HCT116 (cell line): ENCODE measurements at regions of chr19 and their contacts with region 1.

Region 1: DNA sequence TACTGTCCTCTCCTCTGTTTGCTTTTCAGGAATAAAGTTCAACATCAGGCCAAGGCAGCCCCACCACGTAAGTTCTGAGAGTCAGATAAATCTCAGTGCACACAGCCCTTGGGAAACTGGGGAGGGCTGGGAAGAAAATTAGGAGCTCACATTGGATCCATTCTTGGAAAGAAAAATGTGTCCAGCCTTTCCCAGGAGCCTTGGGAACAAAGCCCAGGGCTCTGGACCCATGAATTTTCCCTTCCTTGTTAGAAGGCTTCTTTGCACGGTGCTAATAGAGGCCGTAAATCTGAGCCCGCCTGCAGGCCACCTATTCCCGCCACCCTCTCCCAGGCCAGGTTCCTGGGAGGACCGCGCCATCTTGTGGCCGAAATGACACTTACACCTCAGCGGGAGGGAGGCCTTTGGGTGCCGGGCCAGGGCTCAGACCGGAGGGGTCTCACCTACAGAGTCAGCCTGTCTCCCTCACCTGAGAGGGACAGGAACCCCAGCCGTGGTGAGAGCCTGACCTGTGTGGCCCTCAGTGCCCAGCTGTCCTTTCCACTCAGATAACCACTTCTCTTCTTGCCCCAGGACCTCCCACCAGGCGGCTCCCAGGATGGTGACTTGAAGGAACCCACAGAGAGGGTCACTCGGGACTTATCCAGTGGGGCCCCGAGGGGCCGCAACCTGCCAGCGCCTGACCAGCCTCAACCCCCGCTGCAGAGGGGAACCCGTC is 25.1 kb upstream of the KCTD15 start:
- DNase-seq: no peak
- ATAC-seq: peak; percentile 94
- H3K4me3 ChIP-seq: no peak overlapping the region
- H3K27ac ChIP-seq: no peak overlapping the region
- H3K4me1 ChIP-seq: no peaks in the 10 kb centered on the region
- H3K27me3 ChIP-seq: peaks cover 18% of the 10 kb centered on the region
- CTCF ChIP-seq: peak; percentile 79 to 91 (median 86)
- POLR2A ChIP-seq: no peak
- RAD21 ChIP-seq: peak; percentile 93

Region 2: DNA sequence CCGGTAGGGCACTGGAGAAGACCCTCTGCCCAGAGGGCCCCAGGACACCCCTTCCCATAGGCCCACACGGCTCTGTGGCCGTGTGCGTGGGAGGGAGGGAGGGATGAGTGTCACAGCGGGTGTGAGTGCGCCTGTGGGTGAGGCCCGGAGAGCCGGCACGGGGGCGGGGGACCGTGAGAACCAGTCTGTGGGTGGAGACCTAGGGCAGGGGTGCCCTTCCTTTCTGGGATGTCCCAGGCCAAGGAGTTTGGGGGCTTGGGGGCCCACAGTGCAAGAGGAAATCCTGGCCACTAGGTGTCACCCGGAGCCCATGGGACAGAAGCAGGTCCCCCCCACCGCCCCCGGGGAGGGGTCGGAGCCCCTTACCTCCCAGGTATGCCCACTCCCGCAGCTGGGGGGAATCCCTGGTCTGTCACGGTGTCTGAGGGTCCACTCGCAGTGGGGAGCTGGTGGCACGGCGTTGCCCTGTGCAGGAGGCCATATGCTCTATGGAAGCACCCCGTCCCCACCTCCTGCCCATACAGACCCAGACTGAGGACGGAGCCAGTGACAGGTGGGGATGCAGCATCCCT is 529.9 kb before region 1 on chr19:
- CTCF ChIA-PET with region 1: no interaction called
- POLR2A ChIA-PET with region 1: no interaction called
- RAD21 ChIA-PET with region 1: no interaction called
- intact Hi-C with region 1: loop called (anchors 1 kb)
- DNase-seq: no peak
- ATAC-seq: peak; percentile 77
- H3K4me3 ChIP-seq: no peak overlapping the region
- H3K27ac ChIP-seq: no peak overlapping the region
- H3K4me1 ChIP-seq: peaks cover 0 to 11% of the 10 kb centered on the region in 2 experiments; a peak in 2 of 4 replicates
- H3K27me3 ChIP-seq: no peaks in the 10 kb centered on the region
- CTCF ChIP-seq: peak; percentile 61 to 82 (median 78)
- POLR2A ChIP-seq: no peak
- RAD21 ChIP-seq: peak; percentile 93

Region 3: DNA sequence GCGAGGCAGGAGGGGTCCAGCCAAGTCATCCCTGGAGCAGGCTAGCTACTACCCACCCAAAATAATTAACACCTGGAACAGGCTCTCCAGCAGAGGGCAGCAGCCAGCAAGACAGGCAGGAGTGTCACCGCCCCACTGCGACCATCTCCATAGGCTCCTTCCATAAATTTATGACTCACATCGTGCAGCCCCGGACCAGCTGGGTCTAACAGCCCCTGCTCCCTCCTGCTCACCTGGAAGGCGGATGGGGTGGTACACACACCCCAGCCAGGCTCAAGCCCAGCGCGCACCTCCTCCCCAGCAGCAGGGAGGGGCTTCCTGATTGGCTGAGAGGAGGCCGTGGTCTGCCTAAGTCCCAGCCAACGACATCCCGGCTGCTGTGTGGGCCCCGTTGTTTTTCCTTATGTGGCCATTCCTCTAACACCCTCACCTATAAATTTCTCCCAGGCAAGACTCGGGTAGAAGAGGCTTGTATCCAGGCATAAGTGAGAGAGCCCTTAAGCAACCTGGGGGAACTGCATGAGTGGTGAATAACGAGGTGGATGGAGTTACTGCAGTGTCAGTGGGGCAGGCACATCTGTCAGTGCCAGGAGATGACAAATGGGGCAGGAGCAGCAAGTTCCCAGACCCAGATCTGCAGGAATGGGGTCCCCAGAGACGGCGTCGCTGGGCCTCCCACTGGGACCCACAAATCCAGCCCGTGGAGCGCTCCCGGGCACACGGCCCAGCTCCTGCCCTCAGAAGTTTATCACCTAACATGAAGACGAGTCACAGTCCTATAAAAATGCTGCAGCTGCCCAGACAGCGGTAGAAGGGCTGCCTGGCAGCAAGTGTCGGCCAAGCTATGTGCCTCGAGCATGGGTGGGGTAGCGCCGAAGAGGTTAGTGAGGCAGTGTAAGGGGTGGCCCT is 355.0 kb before region 1 on chr19:
- CTCF ChIA-PET with region 1: interaction called, 50 read pairs
- POLR2A ChIA-PET with region 1: no interaction called
- RAD21 ChIA-PET with region 1: interaction called, 3 to 4 read pairs
- intact Hi-C with region 1: loop called (anchors 5 kb)
- DNase-seq: peak; percentile 52
- ATAC-seq: peak; percentile 91
- H3K4me3 ChIP-seq: no peak overlapping the region
- H3K27ac ChIP-seq: no peak overlapping the region
- H3K4me1 ChIP-seq: peaks cover 0 to 6% of the 10 kb centered on the region in 2 experiments; a peak in 1 of 4 replicates
- H3K27me3 ChIP-seq: no peaks in the 10 kb centered on the region
- CTCF ChIP-seq: peak; percentile 63 to 87 (median 81)
- POLR2A ChIP-seq: no peak
- RAD21 ChIP-seq: peak; percentile 71

Region 4: DNA sequence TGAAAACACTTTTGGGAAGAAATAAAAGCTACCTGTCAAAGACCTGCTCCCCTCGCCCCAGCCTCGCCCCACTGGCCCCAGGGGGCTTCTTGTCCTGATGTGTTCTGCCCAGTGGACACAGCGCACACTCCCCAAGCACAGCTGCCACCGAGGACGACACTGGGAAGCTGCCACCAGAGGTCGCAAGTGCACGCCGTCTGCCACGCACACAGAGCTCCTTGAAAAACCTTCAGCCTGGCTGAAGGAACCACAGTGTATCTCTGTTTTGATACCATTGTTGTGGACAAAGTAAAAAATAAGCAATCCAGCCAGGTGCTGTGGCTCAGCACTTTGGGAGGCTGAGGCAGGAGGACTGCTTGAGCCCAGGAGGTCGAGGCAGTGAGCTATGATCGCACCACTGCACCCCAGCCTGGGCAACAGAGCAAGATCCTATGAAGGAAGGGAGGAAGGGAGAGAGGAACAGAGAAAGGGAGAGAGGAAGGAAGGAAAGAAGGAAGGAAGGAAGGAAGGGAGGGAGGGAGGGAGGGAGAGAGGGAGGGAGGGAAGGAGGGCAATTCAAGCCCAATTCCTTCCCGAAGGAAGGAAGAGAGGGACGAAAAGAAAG is 340.8 kb before region 1 on chr19:
- CTCF ChIA-PET with region 1: interaction called, 52 read pairs
- POLR2A ChIA-PET with region 1: no interaction called
- RAD21 ChIA-PET with region 1: interaction called, 5 to 11 read pairs
- intact Hi-C with region 1: loop called (anchors 1 kb)
- DNase-seq: peak; percentile 22
- ATAC-seq: peak; percentile 98
- H3K4me3 ChIP-seq: no peak overlapping the region
- H3K27ac ChIP-seq: no peak overlapping the region
- H3K4me1 ChIP-seq: no peaks in the 10 kb centered on the region
- H3K27me3 ChIP-seq: no peaks in the 10 kb centered on the region
- CTCF ChIP-seq: peak; percentile 56 to 95 (median 91); a peak in 5 of 6 replicates
- POLR2A ChIP-seq: no peak
- RAD21 ChIP-seq: peak; percentile 78

Region 5: GRCh38 chr19:33649627-33650305 is 121.8 kb before region 1 on chr19:
- CTCF ChIA-PET with region 1: no interaction called
- POLR2A ChIA-PET with region 1: no interaction called
- RAD21 ChIA-PET with region 1: no interaction called
- intact Hi-C with region 1: no loop called
- DNase-seq: no peak
- ATAC-seq: no peak
- H3K4me3 ChIP-seq: no peak overlapping the region
- H3K27ac ChIP-seq: no peak overlapping the region
- H3K4me1 ChIP-seq: no peaks in the 10 kb centered on the region
- H3K27me3 ChIP-seq: peaks cover 7% of the 10 kb centered on the region
- CTCF ChIP-seq: no peak
- POLR2A ChIP-seq: no peak
- RAD21 ChIP-seq: no peak